ENCODE measurements at regions of chr9 and their contacts with region 1.

Region 1: GRCh38 chr9:87684627-87685219 is 41.2 kb upstream of the CTSL start:
- DNase-seq: peak; percentile 69 to 79 (median 72)
- H3K4me3 ChIP-seq: no peak overlapping the region
- H3K27ac ChIP-seq: peak overlapping the region in 1 of 2 donors; percentile 24
- H3K4me1 ChIP-seq: peaks cover 3% of the 10 kb centered on the region
- H3K27me3 ChIP-seq: no peaks in the 10 kb centered on the region
- CTCF ChIP-seq: peak; percentile 45 to 61 (median 55)
- EP300 ChIP-seq: no peak
- POLR2A ChIP-seq: no peak

Region 2: GRCh38 chr9:86893811-86894490 is 790.8 kb before region 1 on chr9:
- intact Hi-C with region 1: no loop called
- DNase-seq: no peak
- H3K4me3 ChIP-seq: no peak overlapping the region
- H3K27ac ChIP-seq: no peak overlapping the region
- H3K4me1 ChIP-seq: no peaks in the 10 kb centered on the region
- H3K27me3 ChIP-seq: no peaks in the 10 kb centered on the region
- CTCF ChIP-seq: no peak
- EP300 ChIP-seq: no peak
- POLR2A ChIP-seq: no peak

Region 3: DNA sequence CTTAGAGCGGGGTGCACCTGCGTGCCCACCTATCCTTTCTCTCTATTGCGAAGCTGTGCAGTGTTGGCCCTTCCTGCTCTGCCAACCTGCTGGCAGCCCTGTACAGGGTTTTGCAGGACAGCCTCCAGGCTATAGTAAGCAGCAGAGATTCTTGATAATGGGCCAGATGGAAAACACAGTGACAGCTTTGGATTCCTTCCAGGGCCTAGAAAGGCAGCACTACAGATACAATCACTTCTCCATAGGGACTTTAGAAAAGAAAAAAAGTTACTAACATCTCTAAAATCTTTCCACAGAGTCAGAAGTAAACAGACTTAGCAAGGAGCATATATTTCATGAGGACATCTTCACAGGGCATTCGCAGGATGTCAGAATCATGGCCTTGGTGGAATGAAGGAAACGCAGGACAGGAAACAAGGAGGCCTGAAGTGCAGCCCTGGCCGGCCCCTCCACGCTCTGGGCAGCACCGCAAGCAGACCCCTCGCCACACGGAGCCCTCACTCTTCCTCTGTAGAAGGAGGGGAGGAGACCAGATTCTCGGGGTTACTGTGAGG is 565.3 kb before region 1 on chr9:
- intact Hi-C with region 1: no loop called
- DNase-seq: no peak
- H3K4me3 ChIP-seq: no peak overlapping the region
- H3K27ac ChIP-seq: no peak overlapping the region
- H3K4me1 ChIP-seq: peaks cover 10% of the 10 kb centered on the region
- H3K27me3 ChIP-seq: no peaks in the 10 kb centered on the region
- CTCF ChIP-seq: no peak
- EP300 ChIP-seq: no peak
- POLR2A ChIP-seq: no peak

Region 4: DNA sequence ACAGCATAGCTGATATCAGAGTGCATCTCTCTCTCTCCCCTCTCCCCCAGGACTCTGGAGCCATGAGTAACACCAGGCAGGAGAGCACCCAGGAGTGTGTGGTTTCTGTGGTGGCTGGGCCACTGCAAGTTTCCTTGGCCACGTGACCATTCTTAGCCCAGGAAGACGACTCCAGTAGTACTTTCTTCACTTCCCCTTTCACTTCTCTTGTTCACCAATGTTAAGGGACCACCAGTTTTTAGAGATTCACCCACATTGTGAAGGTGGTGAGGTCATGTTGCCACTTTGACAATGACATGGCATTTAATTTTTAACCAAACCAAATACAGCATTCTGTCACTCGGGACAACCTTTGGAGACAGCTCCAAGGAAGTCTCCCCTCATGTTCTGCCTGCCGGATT is 204.9 kb before region 1 on chr9:
- intact Hi-C with region 1: no loop called
- DNase-seq: no peak
- H3K4me3 ChIP-seq: no peak overlapping the region
- H3K27ac ChIP-seq: no peak overlapping the region
- H3K4me1 ChIP-seq: no peaks in the 10 kb centered on the region
- H3K27me3 ChIP-seq: no peaks in the 10 kb centered on the region
- CTCF ChIP-seq: no peak
- EP300 ChIP-seq: no peak
- POLR2A ChIP-seq: no peak

Region 5: GRCh38 chr9:87592554-87593358 is 92.0 kb before region 1 on chr9:
- intact Hi-C with region 1: no loop called
- DNase-seq: peak; percentile 64 to 85 (median 75)
- H3K4me3 ChIP-seq: no peak overlapping the region
- H3K27ac ChIP-seq: peak overlapping the region in 1 of 2 donors; percentile 39
- H3K4me1 ChIP-seq: peaks cover 49% of the 10 kb centered on the region
- H3K27me3 ChIP-seq: no peaks in the 10 kb centered on the region
- CTCF ChIP-seq: no peak
- EP300 ChIP-seq: no peak
- POLR2A ChIP-seq: no peak

Region 6: DNA sequence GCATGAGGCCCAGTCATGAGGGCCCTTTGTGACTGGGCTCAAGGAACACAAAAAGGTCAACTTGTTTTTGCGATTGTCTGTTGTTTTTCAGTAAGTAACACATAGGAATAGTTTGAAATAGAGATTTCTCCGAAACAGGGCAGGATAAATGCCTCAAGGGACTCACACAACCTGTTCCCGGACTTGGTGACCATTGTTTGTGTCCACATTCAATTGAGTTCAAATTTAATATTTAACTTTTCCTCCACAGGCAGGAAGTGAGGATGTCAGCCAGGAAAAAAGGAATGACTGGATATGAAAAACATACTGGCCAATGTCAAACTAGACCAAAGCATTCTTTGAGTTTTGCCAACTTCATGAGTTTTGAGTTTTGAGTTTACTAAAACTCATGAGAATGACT is 380.9 kb after region 1 on chr9:
- intact Hi-C with region 1: loop called in 1 of 4 experiments (anchors 5 kb)
- DNase-seq: no peak
- H3K4me3 ChIP-seq: no peak overlapping the region
- H3K27ac ChIP-seq: no peak overlapping the region
- H3K4me1 ChIP-seq: no peaks in the 10 kb centered on the region
- H3K27me3 ChIP-seq: no peaks in the 10 kb centered on the region
- CTCF ChIP-seq: no peak
- EP300 ChIP-seq: no peak
- POLR2A ChIP-seq: no peak